Heart right ventricle (tissue), 16 donors: ENCODE measurements at regions of chr11 and their contacts with region 1.

Region 1: DNA sequence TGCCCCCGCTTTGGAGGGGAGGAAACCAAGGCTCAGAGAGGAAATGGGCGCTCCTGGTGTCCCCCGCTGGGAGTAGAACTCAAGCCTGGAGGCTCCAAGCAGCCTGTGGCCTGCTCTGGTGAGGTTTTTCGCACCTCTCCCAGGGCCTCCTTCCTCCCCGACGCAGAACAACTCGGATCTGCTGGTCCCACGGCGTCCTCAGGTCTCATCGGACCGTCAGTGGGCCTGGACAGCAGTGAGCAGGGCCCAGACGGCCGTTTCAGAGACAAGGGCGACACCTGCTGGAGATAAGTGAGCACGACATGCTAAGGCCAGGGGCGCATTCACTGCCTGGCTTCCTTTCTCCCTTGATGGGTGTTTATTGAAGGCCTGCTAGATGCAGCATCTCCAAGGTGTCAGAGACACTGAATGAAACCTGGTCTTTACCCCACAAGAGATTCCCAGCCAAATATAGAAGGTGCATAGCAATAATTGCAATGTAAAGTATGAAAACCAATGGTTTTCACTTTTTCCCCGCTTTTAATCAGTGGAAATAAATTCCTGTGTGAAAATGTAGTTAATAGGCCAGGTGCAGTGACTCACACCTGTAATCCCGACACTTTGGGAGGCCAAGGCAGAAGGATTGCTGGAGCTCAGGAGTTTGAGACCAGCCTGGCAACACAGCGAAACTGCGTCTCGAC is 26.9 kb upstream of the CD82 start:
- DNase-seq: peak; percentile 77 to 79
- ATAC-seq: peak; percentile 91 to 95 (median 94)
- H3K4me3 ChIP-seq: peak overlapping the region in 3 of 10 donors; percentile 5 to 40 (median 12)
- H3K27ac ChIP-seq: no peak overlapping the region
- H3K4me1 ChIP-seq: peaks cover 0 to 16% (median 5%) of the 10 kb centered on the region in 9 donors
- H3K27me3 ChIP-seq: peaks cover 0 to 3% (median 0%) of the 10 kb centered on the region in 7 donors
- CTCF ChIP-seq: peak; percentile 94 to 98 (median 97)

Region 2: GRCh38 chr11:44095506-44096394 is 442.8 kb before region 1 on chr11 and contains the start of gene EXT2:
- intact Hi-C with region 1: loop called in 6 of 10 experiments (anchors 2 to 10 kb)
- DNase-seq: peak; percentile 86 to 93
- ATAC-seq: peak; percentile 96 to 99 (median 98)
- H3K4me3 ChIP-seq: peak within 1 kb of the TSS; percentile 70 to 90 (median 86)
- H3K27ac ChIP-seq: peak within 1 kb of the TSS; percentile 55 to 91 (median 84)
- H3K4me1 ChIP-seq: peaks cover 0 to 39% (median 23%) of the 10 kb centered on the region in 9 donors
- H3K27me3 ChIP-seq: no peaks in the 10 kb centered on the region
- CTCF ChIP-seq: peak; percentile 72 to 98 (median 92)
- total RNA-seq, gene EXT2: 24.4 to 35.1 (median 29.1) TPM

Region 3: DNA sequence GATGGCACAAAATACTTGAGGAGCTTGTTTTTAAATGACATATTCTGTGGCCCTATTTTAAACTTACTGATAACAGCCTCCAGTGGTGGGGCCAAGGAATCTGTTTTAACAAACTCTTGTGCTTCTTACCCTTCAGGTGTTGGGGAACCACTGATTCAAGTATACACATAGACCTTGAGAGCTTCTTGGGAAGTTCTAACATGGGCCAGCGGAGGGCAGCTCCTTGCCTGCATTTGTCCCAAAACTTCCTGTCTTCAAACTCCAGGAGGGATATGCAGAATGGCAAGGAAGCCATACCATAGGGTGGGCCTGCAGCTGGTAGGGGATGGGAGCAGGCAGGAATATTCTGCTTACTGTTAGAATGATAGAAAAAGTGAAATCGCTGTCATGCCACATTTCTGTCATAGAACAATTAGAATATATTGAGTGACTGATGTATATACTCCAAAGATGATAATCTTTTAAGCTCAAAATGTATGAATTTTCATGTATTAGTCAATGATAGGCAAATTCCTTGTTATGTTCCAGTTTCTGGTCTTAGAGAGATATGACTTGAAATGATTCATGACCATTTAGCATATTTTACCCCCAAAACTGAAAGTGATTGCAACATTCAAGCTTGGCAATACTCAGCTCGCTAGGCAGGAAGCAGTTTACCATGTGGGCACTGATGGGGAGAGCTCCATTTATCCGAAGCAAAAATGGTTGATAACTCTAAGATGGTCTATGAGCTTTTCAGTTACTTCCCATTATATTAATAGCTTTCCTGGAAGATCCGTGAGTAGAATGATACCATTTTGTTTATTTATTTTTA is 433.8 kb before region 1 on chr11:
- intact Hi-C with region 1: loop called in 3 of 10 experiments (anchors 5 to 10 kb)
- DNase-seq: no peak
- ATAC-seq: no peak
- H3K4me3 ChIP-seq: no peak overlapping the region
- H3K27ac ChIP-seq: no peak overlapping the region
- H3K4me1 ChIP-seq: peaks cover 0 to 41% (median 15%) of the 10 kb centered on the region in 9 donors
- H3K27me3 ChIP-seq: no peaks in the 10 kb centered on the region
- CTCF ChIP-seq: no peak

Region 4: GRCh38 chr11:44110231-44110679 is 428.3 kb before region 1 on chr11:
- intact Hi-C with region 1: loop called in 7 of 10 experiments (anchors 1 to 10 kb)
- DNase-seq: peak; percentile 33 to 82
- ATAC-seq: peak; percentile 69 to 89 (median 84)
- H3K4me3 ChIP-seq: no peak overlapping the region
- H3K27ac ChIP-seq: peak overlapping the region in 3 of 10 donors; percentile 8 to 38 (median 18)
- H3K4me1 ChIP-seq: peaks cover 9 to 46% (median 29%) of the 10 kb centered on the region in 9 donors
- H3K27me3 ChIP-seq: no peaks in the 10 kb centered on the region
- CTCF ChIP-seq: peak; percentile 59 to 88 (median 79)

Region 5: GRCh38 chr11:44133335-44133946 is 405.1 kb before region 1 on chr11:
- intact Hi-C with region 1: loop called (anchors 2 to 10 kb)
- DNase-seq: no peak
- ATAC-seq: peak in 7 of 8 donors; percentile 16 to 68 (median 48)
- H3K4me3 ChIP-seq: no peak overlapping the region
- H3K27ac ChIP-seq: no peak overlapping the region
- H3K4me1 ChIP-seq: peaks cover 0 to 9% (median 0%) of the 10 kb centered on the region in 9 donors
- H3K27me3 ChIP-seq: no peaks in the 10 kb centered on the region
- CTCF ChIP-seq: peak; percentile 34 to 80 (median 63)

Region 6: DNA sequence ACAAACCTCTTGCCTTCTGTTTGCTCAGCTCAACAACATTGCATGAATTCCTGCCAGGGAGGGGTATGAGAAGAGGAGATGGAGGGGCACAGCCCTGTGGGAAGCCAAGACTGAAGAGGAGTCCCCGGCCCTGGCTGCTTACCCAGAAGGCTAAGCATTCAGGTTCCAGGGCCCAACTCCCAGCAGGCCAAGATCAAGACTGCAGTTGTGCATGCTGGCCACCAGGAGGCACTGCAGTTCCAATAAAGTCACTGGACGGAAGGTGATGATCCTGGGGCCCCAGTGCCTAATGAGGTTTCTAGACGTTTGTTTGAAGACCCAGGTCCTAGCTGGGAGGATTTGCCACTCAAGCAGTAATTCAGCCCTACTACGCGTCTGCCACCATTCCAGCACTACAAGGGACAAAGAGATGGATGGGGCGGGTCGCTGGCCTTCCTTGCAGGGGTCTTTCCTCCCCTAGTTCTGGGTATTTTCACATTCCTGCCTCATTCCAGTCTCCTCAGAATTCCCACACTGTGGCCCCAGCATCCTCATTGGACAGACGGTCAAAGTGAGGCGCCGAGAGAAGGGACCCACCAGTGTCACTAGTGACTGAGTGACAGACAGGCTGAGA is 252.1 kb before region 1 on chr11:
- intact Hi-C with region 1: loop called (anchors 1 to 2 kb)
- DNase-seq: peak; percentile 55 to 56
- ATAC-seq: peak; percentile 65 to 88 (median 74)
- H3K4me3 ChIP-seq: no peak overlapping the region
- H3K27ac ChIP-seq: no peak overlapping the region
- H3K4me1 ChIP-seq: peaks cover 0 to 3% (median 0%) of the 10 kb centered on the region in 9 donors
- H3K27me3 ChIP-seq: peaks cover 0 to 10% (median 0%) of the 10 kb centered on the region in 7 donors
- CTCF ChIP-seq: peak; percentile 91 to 98 (median 96)

Region 7: DNA sequence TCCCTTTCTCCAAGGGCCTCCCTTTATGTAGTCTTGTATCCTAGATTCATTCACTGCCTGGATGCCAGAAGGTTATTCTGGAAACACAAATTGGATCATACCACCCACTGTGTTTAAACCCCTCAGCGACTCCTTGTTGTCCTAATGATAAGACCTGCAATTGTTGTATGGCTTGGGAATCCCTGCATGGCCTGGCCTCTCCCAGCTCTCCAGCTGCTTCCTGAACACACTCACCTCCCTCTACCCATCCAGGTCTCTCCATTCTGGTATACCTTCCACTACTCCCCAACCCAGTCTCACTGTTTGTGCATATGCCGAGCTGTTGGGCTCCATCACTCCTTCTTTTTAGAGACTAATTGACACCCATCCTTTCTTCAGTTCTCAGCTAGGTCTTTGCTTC is 104.3 kb before region 1 on chr11:
- intact Hi-C with region 1: loop called in 1 of 10 experiments (anchors 10 kb)
- DNase-seq: no peak
- ATAC-seq: no peak
- H3K4me3 ChIP-seq: no peak overlapping the region
- H3K27ac ChIP-seq: no peak overlapping the region
- H3K4me1 ChIP-seq: peaks cover 0 to 22% (median 8%) of the 10 kb centered on the region in 9 donors
- H3K27me3 ChIP-seq: peaks cover 0 to 11% (median 0%) of the 10 kb centered on the region in 7 donors
- CTCF ChIP-seq: no peak